ENCODE measurements at regions of chr1 and their contacts with region 1.

Region 1: DNA sequence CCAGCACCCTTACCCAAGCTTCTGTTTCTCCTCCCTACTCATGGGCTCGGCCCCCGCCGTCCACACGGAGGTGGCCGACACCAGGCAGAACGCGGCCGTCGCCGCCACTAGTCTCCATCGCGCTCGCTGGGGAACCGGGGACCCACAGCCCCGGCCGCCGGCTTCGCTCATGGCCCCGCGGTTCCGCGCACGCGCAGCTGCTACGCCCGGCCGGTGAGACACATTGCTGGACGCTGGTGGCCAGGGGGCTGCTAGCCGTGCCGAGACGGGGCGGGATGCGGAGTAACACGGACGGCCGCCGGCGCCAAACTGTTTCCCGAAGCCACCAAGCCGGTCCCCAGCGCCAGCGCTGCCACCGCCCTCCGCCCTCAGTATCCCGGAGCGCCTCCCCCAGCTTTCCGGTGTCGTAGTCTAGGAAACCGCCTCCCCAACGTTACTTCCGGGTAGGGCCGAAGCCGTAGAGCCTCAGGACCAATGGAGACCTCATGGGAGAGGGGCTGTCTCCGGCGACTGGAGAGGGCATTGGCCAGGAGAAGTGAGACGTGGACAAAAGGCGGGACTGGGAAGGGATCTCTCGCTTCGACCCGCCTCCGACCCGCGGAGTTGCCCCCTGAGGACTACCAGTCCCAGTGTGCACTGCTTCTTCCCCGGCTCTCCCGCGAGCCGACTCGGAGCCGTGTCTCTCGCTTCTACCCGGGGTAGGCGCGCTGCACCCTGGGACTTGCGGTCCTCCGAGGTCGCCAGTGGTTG is at the start of gene EDEM3:
- DNase-seq: peak; percentile 96 to 97 (median 97)
- H3K4me3 ChIP-seq: peak within 1 kb of the TSS; percentile 95
- H3K27ac ChIP-seq: peak within 1 kb of the TSS; percentile 83 to 91
- H3K4me1 ChIP-seq: peaks cover 3% of the 10 kb centered on the region
- H3K27me3 ChIP-seq: no peaks in the 10 kb centered on the region
- CTCF ChIP-seq: no peak
- EP300 ChIP-seq: no peak
- POLR2A ChIP-seq: peak; percentile 92
- total RNA-seq, gene EDEM3: 15.5 to 22.7 (median 20.9) TPM

Region 2: DNA sequence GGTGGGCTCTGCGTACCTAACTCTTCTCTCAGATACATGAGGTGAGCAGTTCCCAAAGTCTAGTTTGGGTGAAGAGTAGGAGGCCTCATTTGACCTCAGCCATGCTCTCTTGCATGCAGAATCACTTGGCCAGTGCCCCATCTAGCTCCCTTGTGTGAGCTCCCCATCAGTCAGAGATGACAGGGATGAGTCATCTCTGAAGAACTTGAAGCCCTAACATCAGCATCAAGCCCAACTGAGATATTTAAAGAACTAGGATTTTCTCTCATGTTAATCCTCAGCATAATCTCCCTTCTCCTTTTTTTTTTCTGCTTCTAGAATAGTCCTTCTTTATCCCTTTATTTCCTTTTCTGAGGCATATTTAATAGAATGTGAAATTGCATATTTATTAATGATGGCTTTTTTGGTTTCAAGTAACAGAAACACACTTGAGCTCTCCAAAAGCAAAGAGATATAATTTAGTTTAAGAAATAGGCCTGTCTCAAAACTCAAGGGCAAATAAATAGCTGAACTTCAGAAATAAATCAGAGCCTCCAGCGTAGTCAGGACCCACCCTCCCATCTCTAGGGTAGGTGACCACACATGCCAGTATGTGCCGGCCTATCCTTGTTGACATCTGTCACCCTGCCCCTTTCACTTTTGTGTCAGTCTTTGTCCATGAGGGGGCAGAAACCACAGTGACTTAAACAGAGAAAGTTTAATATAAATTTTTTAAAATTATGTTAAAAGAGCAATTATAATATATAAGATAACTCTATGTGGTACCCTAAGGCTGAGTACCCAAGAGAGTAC is 590.8 kb before region 1 on chr1:
- intact Hi-C with region 1: no loop called
- DNase-seq: no peak
- H3K4me3 ChIP-seq: no peak overlapping the region
- H3K27ac ChIP-seq: no peak overlapping the region
- H3K4me1 ChIP-seq: no peaks in the 10 kb centered on the region
- H3K27me3 ChIP-seq: no peaks in the 10 kb centered on the region
- CTCF ChIP-seq: no peak
- EP300 ChIP-seq: no peak
- POLR2A ChIP-seq: no peak

Region 3: DNA sequence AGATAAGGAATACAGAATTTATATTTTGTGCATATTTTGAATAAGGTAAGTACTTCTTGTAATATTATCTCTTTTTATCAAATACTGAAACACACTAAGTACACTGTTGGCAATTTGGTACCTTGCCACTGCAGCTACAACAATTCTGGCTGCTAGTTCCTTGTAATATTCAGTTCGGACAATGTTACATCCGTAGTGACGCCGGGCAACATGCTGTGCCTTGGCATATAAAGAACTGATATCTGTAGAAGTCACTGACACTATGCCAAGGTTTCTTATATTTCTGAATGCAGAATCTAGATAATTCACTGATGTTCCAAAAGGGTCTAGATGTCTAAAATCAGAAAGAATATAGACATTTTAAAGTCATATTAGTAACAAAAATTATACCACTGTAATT is 384.6 kb after region 1 on chr1:
- intact Hi-C with region 1: no loop called
- DNase-seq: no peak
- H3K4me3 ChIP-seq: no peak overlapping the region
- H3K27ac ChIP-seq: no peak overlapping the region
- H3K4me1 ChIP-seq: no peaks in the 10 kb centered on the region
- H3K27me3 ChIP-seq: no peaks in the 10 kb centered on the region
- CTCF ChIP-seq: no peak
- EP300 ChIP-seq: no peak
- POLR2A ChIP-seq: no peak

Region 4: GRCh38 chr1:185317034-185317885 is 562.6 kb after region 1 on chr1 and contains the start of gene IVNS1ABP:
- intact Hi-C with region 1: loop called in 1 of 4 experiments (anchors 10 kb)
- DNase-seq: peak; percentile 92 to 95 (median 95)
- H3K4me3 ChIP-seq: peak within 1 kb of the TSS; percentile 90
- H3K27ac ChIP-seq: peak within 1 kb of the TSS; percentile 76 to 92
- H3K4me1 ChIP-seq: peaks cover 2% of the 10 kb centered on the region
- H3K27me3 ChIP-seq: no peaks in the 10 kb centered on the region
- CTCF ChIP-seq: no peak
- EP300 ChIP-seq: no peak
- POLR2A ChIP-seq: peak; percentile 94
- total RNA-seq, gene IVNS1ABP: 31.2 to 73.9 (median 54.2) TPM

Measured in ovary (tissue), 10 donors.